ENCODE measurements at regions of chr17 and their contacts with region 1.

Region 1: DNA sequence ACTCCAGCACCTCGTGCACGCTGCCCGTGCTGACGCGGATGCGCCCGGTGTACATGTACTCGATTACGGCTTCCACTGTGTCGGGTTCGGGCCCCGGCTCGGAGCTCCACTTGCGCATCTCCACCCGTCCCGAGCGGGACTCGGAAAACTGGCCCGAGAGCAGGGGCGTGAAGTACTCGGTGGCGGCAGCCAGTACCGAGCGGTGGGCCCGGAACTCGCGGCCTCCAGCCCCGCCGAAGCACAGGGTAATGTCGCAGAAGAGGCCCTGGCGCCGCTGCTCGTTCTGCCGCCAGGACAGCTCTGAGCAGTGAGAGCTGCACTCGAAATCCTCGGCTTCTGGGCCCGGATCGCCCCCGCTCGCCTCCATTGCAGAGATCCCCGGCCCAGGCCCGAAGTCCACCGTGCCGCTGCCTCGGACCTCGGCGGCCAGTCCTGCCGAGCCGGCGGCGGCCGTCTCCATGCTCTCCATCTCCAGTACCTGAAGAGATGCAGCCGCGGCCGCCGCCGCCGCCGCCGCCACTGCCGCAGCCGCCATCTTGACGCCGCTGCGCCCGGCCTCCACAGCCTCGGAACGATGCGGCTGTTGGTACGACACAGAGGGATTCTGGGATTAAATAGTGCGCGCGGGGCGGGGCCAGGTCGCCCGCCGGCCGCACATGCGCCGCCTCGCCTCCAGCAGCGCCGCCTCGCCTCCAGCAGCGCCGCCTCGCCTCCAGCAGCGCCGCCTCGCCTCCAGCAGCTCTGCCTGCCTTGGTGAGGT is at the start of gene KLHL11:
- DNase-seq: peak; percentile 94
- ATAC-seq: peak; percentile 88
- H3K4me3 Mint-ChIP-seq: no peak within 1 kb of the TSS
- H3K27ac Mint-ChIP-seq: peak within 1 kb of the TSS; percentile 68
- H3K4me1 Mint-ChIP-seq: peaks cover 49% of the 10 kb centered on the region
- H3K27me3 Mint-ChIP-seq: no peaks in the 10 kb centered on the region
- total RNA-seq, gene KLHL11: 16.4 to 18.0 TPM

Region 2: DNA sequence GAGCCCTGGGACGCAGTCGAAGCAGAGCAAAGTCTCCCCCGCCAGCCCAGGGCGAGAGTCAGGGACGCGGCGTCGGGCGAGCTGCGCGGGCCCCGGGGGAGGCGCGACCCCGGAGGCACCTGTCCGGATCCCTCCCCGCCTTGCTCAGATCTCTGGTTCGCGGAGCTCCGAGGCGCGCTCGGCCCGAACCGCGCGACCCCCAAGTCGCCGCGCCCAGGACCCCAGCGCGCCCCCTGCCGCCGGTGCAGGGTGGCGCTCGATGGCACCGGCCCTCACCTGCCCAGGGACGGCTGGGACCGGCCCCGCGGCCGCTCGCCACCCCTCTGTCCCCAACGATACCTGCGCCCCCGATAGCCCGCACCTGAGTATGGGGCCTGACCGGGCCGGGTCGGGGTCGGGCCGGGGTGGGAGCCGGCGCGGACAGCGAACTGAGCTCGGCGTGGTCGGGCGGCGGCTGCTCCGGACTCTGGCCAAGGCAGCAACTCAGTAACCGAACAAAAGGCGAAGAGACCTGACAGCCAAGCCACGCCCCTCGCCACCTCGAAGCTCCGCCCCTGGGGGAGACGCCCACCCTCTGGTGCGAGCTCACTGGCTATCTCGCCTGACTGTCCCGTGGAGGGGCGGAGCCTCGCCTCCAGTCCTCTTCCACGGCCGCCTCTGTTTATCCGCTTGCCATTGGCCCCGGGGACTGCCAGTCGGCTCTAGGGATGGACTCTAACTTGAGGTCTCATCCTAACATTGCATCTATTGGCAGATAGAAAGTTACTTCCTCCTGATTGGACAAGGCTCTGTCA is 78.6 kb before region 1 on chr17 and contains the start of gene JUP:
- CTCF ChIA-PET with region 1: no interaction called
- POLR2A ChIA-PET with region 1: no interaction called
- intact Hi-C with region 1: loop called in 1 of 2 experiments (anchors 2 kb)
- DNase-seq: peak; percentile 96
- ATAC-seq: peak; percentile 99
- H3K4me3 Mint-ChIP-seq: peak within 1 kb of the TSS; percentile 44
- H3K27ac Mint-ChIP-seq: no peak within 1 kb of the TSS
- H3K4me1 Mint-ChIP-seq: peaks cover 17% of the 10 kb centered on the region
- H3K27me3 Mint-ChIP-seq: peaks cover 22% of the 10 kb centered on the region
- total RNA-seq, gene JUP: 0.34 to 0.54 TPM

Region 3: GRCh38 chr17:41811549-41812380 is 53.3 kb before region 1 on chr17 and contains the start of gene P3H4:
- CTCF ChIA-PET with region 1: interaction called, 5 read pairs
- POLR2A ChIA-PET with region 1: no interaction called
- intact Hi-C with region 1: loop called in 1 of 2 experiments (anchors 1 kb)
- DNase-seq: peak; percentile 86
- ATAC-seq: peak; percentile 90
- H3K4me3 Mint-ChIP-seq: peak within 1 kb of the TSS; percentile 76
- H3K27ac Mint-ChIP-seq: peak within 1 kb of the TSS; percentile 58
- H3K4me1 Mint-ChIP-seq: peaks cover 22% of the 10 kb centered on the region
- H3K27me3 Mint-ChIP-seq: peaks cover 2% of the 10 kb centered on the region
- total RNA-seq, gene P3H4: 1.5 to 2.0 TPM

Region 4: DNA sequence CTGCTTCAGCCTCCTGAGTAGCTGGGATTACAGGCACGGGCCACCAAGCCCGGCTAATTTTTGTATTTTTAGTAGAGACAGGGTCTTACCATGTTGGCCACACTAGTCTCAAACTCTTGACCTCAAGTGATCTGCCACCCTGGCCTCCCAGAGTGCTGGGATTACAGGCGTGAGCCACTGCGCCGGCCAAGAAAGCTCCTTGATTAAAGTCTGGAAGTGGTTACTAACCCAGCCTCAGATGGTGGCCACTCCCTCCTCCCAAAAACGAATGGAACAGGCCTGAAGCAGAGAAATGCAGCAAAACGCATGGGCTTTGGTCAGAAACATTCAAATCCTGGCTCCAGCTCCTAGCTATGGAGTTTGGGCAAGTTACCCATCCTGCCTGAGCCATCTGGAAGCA is 40.9 kb before region 1 on chr17:
- CTCF ChIA-PET with region 1: no interaction called
- POLR2A ChIA-PET with region 1: no interaction called
- intact Hi-C with region 1: no loop called
- DNase-seq: no peak
- ATAC-seq: no peak
- H3K4me3 Mint-ChIP-seq: no peak overlapping the region
- H3K27ac Mint-ChIP-seq: no peak overlapping the region
- H3K4me1 Mint-ChIP-seq: no peaks in the 10 kb centered on the region
- H3K27me3 Mint-ChIP-seq: no peaks in the 10 kb centered on the region

Region 5: GRCh38 chr17:41835800-41836549 is 29.0 kb before region 1 on chr17 and contains the start of gene NT5C3B:
- CTCF ChIA-PET with region 1: interaction called, 3 read pairs
- POLR2A ChIA-PET with region 1: no interaction called
- intact Hi-C with region 1: loop called (anchors 1 to 2 kb)
- DNase-seq: peak; percentile 67
- ATAC-seq: peak; percentile 84
- H3K4me3 Mint-ChIP-seq: peak within 1 kb of the TSS; percentile 80
- H3K27ac Mint-ChIP-seq: peak within 1 kb of the TSS; percentile 70
- H3K4me1 Mint-ChIP-seq: peaks cover 13% of the 10 kb centered on the region
- H3K27me3 Mint-ChIP-seq: no peaks in the 10 kb centered on the region
- total RNA-seq, gene NT5C3B: 37.5 to 46.9 TPM

Region 6: DNA sequence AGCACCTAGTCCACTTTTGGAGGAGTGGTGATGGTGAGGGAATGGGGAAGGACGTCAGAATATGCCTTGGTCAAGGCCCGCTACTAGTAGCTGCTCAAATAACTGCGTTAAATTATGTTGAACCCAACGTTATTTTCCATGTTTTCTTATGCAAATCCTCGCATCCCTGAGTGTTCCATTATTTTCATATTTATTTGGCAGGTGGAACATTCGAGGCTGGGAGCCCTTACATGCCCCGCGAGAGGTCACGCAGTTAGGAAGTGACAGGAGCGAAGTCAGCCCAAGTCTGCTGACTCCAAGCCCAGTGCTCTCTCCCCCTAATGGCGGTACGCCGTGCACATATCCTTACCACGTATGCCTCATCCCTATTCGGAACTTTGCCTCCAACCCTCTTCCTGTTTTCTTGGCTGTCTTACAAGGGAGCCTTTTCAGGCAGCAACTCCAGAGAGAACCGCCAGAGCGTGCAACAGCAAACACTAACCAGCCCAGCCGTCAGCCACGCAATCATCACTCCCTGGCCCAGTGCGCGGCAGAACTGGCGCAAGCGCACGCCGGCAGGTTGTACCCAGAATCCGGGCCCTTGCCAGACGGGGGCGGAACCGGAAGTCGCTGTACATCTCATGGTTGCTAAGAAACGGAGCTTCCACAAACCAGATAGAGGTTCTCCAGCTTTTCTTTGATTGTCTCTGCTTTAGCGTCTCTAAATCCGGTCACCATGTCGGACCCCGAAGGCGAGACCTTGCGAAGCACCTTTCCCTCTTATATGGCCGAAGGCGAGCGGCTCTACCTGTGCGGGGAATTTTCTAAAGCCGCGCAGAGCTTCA is 65.2 kb after region 1 on chr17 and contains the start of gene ODAD4:
- CTCF ChIA-PET with region 1: no interaction called
- POLR2A ChIA-PET with region 1: no interaction called
- intact Hi-C with region 1: loop called in 1 of 2 experiments (anchors 1 kb)
- DNase-seq: peak; percentile 98
- ATAC-seq: peak; percentile 99
- H3K4me3 Mint-ChIP-seq: peak within 1 kb of the TSS; percentile 96
- H3K27ac Mint-ChIP-seq: peak within 1 kb of the TSS; percentile 98
- H3K4me1 Mint-ChIP-seq: peaks cover 21% of the 10 kb centered on the region
- H3K27me3 Mint-ChIP-seq: no peaks in the 10 kb centered on the region
- total RNA-seq, gene ODAD4: 0.81 to 1.1 TPM